ENCODE measurements at regions of chr4 and their contacts with region 1.

Region 1: DNA sequence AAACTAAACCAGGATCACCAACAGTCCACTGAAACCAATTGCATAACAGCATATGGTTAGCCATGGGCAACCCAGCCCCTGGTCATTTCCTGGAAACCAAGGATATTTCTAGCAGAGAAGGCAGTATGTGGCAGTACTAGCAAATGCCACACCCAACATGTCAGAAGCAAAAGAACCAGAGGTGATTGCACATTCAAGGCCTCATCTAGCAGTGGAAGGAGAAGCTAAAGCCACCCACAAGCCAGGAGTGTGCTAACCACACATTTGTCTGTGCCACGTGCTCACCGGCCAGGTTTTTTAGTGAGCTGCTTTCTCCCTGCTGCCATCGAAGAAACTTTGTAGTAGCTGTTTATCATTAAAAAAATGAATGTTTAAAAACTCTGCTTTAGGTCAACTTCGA is 42.0 kb downstream of the TEC start:
- DNase-seq: peak in 2 of 3 donors; percentile 42 to 58
- H3K4me3 ChIP-seq: peak overlapping the region in 1 of 7 experiments; percentile 5
- H3K27ac ChIP-seq: no peak overlapping the region
- H3K4me1 ChIP-seq: peaks cover 10 to 30% (median 21%) of the 10 kb centered on the region in 4 experiments
- H3K27me3 ChIP-seq: no peaks in the 10 kb centered on the region

Region 2: DNA sequence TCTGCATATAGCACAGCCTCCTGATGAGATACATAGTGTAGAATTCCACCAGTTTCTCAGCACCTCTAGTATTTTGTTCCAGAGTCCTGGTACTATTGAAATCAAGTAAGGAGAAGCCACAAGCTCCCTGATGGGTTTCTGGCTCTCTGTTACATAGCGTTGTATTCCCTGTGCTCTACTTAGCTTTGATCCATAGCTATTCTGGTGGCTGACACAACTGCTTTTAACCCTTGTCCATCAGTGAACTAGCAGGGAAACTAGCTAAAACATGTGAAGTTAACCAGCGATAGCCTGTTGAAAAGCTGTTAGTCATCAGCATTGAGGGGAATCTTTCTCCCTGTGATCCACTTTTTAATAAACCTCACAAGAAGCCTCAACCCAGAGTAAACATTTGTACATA is 184.2 kb before region 1 on chr4:
- CTCF ChIA-PET with region 1: no interaction called
- POLR2A ChIA-PET with region 1: no interaction called
- DNase-seq: no peak
- H3K4me3 ChIP-seq: no peak overlapping the region
- H3K27ac ChIP-seq: no peak overlapping the region
- H3K4me1 ChIP-seq: peaks cover 13 to 25% (median 19%) of the 10 kb centered on the region in 4 experiments
- H3K27me3 ChIP-seq: peaks cover 0 to 6% (median 0%) of the 10 kb centered on the region in 5 experiments

Region 3: GRCh38 chr4:48093949-48094550 is 133.6 kb before region 1 on chr4:
- CTCF ChIA-PET with region 1: no interaction called
- POLR2A ChIA-PET with region 1: no interaction called
- DNase-seq: peak; percentile 15 to 77 (median 61)
- H3K4me3 ChIP-seq: no peak overlapping the region
- H3K27ac ChIP-seq: no peak overlapping the region
- H3K4me1 ChIP-seq: no peaks in the 10 kb centered on the region
- H3K27me3 ChIP-seq: no peaks in the 10 kb centered on the region

Region 4: GRCh38 chr4:48212165-48212564 is 15.5 kb before region 1 on chr4:
- CTCF ChIA-PET with region 1: interaction called, 31 read pairs
- POLR2A ChIA-PET with region 1: interaction called, 3 read pairs
- DNase-seq: peak; percentile 86 to 98 (median 94)
- H3K4me3 ChIP-seq: peak overlapping the region in 4 of 7 experiments; percentile 4 to 60 (median 28)
- H3K27ac ChIP-seq: peak overlapping the region; percentile 72 to 84
- H3K4me1 ChIP-seq: peaks cover 28 to 79% (median 58%) of the 10 kb centered on the region in 4 experiments
- H3K27me3 ChIP-seq: no peaks in the 10 kb centered on the region

Region 5: GRCh38 chr4:48307528-48307927 is 79.9 kb after region 1 on chr4:
- CTCF ChIA-PET with region 1: no interaction called
- POLR2A ChIA-PET with region 1: no interaction called
- DNase-seq: no peak
- H3K4me3 ChIP-seq: no peak overlapping the region
- H3K27ac ChIP-seq: no peak overlapping the region
- H3K4me1 ChIP-seq: no peaks in the 10 kb centered on the region
- H3K27me3 ChIP-seq: no peaks in the 10 kb centered on the region

Region 6: DNA sequence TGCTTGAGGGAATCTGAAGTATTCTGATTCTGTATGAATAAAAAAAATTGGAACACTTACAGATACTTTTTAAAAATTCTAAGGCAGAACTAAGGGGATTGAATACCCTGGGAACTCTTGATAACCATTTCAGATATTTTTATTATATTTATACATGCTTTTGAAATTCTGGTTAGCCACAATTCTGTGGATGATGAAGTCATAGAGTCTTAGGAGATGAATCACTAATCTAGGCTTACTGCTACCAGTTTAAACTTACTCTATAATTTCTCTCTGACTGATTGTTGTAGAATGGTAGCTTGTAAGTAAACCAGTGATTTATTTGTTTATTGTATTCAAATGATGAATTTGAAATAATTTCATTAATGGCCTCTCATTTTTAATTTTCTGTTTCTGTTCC is 102.3 kb after region 1 on chr4:
- CTCF ChIA-PET with region 1: no interaction called
- POLR2A ChIA-PET with region 1: no interaction called
- DNase-seq: no peak
- H3K4me3 ChIP-seq: no peak overlapping the region
- H3K27ac ChIP-seq: no peak overlapping the region
- H3K4me1 ChIP-seq: no peaks in the 10 kb centered on the region
- H3K27me3 ChIP-seq: no peaks in the 10 kb centered on the region